ENCODE measurements at regions of chr14 and their contacts with region 1.

Region 1: GRCh38 chr14:51283402-51284085 is 43.5 kb downstream of the TMX1 start:
- DNase-seq: peak; percentile 93
- H3K4me3 ChIP-seq: no peak overlapping the region
- H3K27ac ChIP-seq: no peak overlapping the region
- H3K4me1 ChIP-seq: no peaks in the 10 kb centered on the region
- H3K27me3 ChIP-seq: no peaks in the 10 kb centered on the region
- CTCF ChIP-seq: peak; percentile 64 to 67
- POLR2A ChIP-seq: no peak

Region 2: DNA sequence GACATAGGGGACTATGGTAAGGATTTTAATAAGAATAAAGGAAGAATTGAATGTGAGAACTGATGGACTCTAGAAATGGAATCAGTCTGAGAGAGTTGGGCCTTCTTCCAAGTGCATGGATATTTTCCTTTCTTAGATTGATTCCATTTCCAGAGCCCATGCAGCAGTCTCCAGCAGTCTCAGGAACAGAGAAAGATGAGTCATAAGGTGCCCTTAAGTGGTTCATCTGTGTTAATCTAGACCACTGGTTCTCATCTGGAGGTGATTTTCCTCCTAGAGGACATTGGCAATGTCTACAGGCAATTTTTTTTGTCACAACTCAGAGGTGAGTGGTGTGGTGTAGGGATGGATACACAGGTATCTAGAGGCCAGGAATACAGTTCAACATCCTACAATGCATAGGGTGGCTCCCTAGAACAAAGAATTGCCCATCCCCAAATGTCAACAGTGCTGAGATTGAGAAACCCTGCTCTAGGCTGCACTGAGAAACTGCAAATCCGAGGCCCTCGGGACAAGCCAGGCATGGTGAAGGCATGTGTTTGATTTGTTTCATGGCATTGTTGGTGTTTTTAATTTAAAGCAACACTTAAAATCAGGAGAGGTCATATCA is 214.4 kb before region 1 on chr14:
- CTCF ChIA-PET with region 1: no interaction called
- POLR2A ChIA-PET with region 1: no interaction called
- dilution Hi-C with region 1: no loop called
- intact Hi-C with region 1: no loop called
- DNase-seq: no peak
- H3K4me3 ChIP-seq: no peak overlapping the region
- H3K27ac ChIP-seq: no peak overlapping the region
- H3K4me1 ChIP-seq: no peaks in the 10 kb centered on the region
- H3K27me3 ChIP-seq: peaks cover 2 to 6% of the 10 kb centered on the region in 2 experiments
- CTCF ChIP-seq: no peak
- POLR2A ChIP-seq: no peak

Region 3: DNA sequence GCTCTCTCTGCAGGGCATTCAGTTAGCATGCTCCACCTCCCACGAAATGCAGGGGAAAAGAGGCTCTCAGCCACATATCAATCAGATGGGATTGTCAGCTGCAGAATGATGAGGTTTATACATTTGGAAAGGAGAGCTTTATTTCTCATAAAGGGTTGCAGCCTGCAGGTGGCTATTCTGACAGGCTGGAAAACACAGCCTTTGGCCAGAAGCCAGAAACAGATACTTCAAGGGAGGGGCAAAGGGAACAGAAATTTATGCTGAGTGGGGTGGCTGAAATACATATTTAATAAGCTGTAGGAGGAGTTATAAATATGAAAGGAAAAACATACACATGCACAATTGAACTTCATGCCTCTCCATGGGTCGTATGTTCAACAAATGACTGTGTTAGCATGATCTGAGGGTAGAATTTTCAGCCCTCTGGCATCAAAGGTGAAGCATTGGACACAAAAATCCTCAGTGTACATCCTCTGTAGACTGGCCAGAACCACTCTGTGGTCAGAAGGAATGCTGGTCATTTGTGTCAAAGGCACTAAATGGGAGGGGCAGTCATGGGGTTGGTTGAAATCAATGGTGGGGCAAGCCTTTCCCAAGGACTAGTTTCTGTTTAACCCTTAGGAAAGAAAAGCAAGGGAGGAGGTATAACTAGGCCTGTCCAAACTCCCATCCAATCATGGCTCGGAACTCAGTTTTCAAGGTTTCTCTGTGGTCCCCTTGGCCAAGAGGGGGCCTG is 18.9 kb after region 1 on chr14:
- CTCF ChIA-PET with region 1: interaction called, 12 read pairs
- POLR2A ChIA-PET with region 1: no interaction called
- dilution Hi-C with region 1: no loop called
- intact Hi-C with region 1: no loop called
- DNase-seq: no peak
- H3K4me3 ChIP-seq: no peak overlapping the region
- H3K27ac ChIP-seq: no peak overlapping the region
- H3K4me1 ChIP-seq: no peaks in the 10 kb centered on the region
- H3K27me3 ChIP-seq: no peaks in the 10 kb centered on the region
- CTCF ChIP-seq: no peak
- POLR2A ChIP-seq: no peak

Region 4: GRCh38 chr14:51539571-51540037 is 256.1 kb after region 1 on chr14:
- CTCF ChIA-PET with region 1: interaction called, 10 read pairs
- POLR2A ChIA-PET with region 1: no interaction called
- dilution Hi-C with region 1: no loop called
- intact Hi-C with region 1: loop called (anchors 10 kb)
- DNase-seq: peak; percentile 82
- H3K4me3 ChIP-seq: no peak overlapping the region
- H3K27ac ChIP-seq: peak overlapping the region; percentile 96
- H3K4me1 ChIP-seq: peaks cover 28% of the 10 kb centered on the region
- H3K27me3 ChIP-seq: no peaks in the 10 kb centered on the region
- CTCF ChIP-seq: no peak
- POLR2A ChIP-seq: no peak

Region 5: GRCh38 chr14:51716610-51717009 is 433.1 kb after region 1 on chr14:
- CTCF ChIA-PET with region 1: interaction called, 5 read pairs
- POLR2A ChIA-PET with region 1: no interaction called
- dilution Hi-C with region 1: no loop called
- intact Hi-C with region 1: loop called (anchors 5 kb)
- DNase-seq: no peak
- H3K4me3 ChIP-seq: no peak overlapping the region
- H3K27ac ChIP-seq: no peak overlapping the region
- H3K4me1 ChIP-seq: peaks cover 2% of the 10 kb centered on the region
- H3K27me3 ChIP-seq: no peaks in the 10 kb centered on the region
- CTCF ChIP-seq: no peak
- POLR2A ChIP-seq: no peak

Region 6: DNA sequence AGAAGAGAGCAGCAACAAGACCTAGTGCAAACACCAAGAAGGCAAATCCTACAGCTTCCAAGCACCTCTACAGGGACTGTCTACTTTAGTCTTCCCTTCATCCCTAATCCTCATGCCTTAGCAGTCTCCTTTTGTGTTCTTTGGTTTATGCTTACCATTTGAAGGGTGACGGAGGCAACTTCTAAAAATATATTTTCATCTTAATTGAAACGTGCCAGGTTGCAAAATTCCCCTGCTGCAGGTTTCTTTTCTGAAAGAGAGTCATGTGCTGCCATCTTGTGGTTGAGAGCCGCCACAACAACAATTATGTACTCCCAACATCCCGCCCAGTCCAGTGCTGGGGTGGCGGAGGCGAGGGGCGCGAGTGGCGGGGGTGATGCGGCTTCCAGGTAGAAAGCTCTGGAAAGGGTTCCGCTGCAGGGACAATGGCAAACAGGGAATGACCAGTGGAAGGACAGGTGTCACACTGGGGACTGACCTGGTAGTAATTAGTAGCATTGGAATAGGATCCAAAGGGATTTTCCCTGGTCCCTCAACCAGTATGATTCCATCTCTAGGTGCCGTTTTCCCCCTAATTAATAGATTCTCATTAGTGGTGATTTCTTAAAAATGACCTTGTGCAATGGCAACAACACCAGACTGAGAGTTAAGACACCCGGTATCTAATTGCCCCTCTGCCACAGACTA is 496.6 kb after region 1 on chr14:
- CTCF ChIA-PET with region 1: interaction called, 240 read pairs
- POLR2A ChIA-PET with region 1: no interaction called
- dilution Hi-C with region 1: no loop called
- intact Hi-C with region 1: loop called (anchors 1 kb)
- DNase-seq: peak; percentile 67
- H3K4me3 ChIP-seq: no peak overlapping the region
- H3K27ac ChIP-seq: no peak overlapping the region
- H3K4me1 ChIP-seq: peaks cover 3% of the 10 kb centered on the region
- H3K27me3 ChIP-seq: peaks cover 18 to 38% of the 10 kb centered on the region in 2 experiments
- CTCF ChIP-seq: peak; percentile 66 to 78
- POLR2A ChIP-seq: no peak

Region 7: DNA sequence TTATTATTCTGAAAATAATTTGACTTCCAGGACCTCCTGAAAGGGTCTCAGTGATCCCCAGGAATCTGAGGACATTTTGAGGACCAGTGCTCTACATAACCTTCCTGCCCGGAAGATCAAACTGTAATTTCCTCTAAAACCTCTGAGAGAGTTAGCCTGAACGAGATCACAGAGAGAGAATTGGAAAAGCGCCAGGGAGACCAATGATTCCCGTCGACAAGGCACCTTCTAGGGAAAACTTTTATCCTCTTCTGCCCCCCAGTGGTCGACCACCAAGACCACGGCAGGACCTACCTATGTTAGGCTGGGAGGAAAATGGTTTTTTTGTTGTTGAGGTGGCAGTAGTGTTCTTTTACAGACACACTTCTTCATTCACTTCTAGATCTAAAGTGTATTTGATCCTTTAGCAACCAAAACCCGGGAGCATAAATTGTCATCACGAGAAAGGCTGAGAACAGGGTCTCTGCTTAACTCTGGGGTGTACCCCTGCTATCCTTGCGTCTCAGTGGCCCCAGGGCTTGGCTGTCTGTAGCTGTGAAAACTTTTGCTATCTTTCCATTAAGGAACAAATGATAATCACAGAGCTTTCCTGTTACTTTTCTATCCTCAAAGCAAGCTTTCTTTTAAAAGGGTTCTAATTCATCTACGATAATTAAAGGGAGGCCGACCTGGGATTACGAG is 848.2 kb after region 1 on chr14:
- CTCF ChIA-PET with region 1: no interaction called
- POLR2A ChIA-PET with region 1: no interaction called
- dilution Hi-C with region 1: no loop called
- intact Hi-C with region 1: loop called (anchors 2 kb)
- DNase-seq: peak; percentile 86
- H3K4me3 ChIP-seq: no peak overlapping the region
- H3K27ac ChIP-seq: no peak overlapping the region
- H3K4me1 ChIP-seq: peaks cover 3% of the 10 kb centered on the region
- H3K27me3 ChIP-seq: no peaks in the 10 kb centered on the region
- CTCF ChIP-seq: peak; percentile 65 to 78
- POLR2A ChIP-seq: no peak